HCT116 (cell line): ENCODE measurements at regions of chr10 and their contacts with region 1.

Region 1: DNA sequence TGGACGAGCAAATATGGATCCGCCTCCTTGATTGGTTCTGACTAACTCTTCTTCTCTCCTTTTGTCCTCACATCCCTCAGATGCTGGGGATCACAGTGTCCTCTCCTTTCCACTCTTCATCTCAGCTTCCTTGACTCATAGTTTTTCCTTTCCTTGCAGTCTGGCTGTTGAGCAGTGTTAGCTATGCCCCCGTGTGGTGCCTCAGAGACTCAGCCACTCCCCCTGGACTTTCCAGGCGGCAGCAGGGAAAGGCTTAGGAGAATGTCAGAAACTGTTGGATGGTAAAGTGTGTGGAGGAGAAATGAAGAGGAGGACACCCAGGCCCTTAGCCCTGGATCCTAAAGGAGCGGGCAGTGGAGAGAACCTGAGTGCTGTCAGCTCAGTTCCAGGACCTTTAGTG is 267.5 kb downstream of the CELF2 start:
- DNase-seq: no peak
- ATAC-seq: peak; percentile 67
- H3K4me3 ChIP-seq: no peak overlapping the region
- H3K27ac ChIP-seq: no peak overlapping the region
- H3K4me1 ChIP-seq: no peaks in the 10 kb centered on the region
- H3K27me3 ChIP-seq: no peaks in the 10 kb centered on the region
- CTCF ChIP-seq: peak in 1 of 3 experiments; percentile 20; a peak in 1 of 6 replicates
- POLR2A ChIP-seq: no peak
- RAD21 ChIP-seq: no peak; the same call in 1 of the 2 replicates

Region 2: DNA sequence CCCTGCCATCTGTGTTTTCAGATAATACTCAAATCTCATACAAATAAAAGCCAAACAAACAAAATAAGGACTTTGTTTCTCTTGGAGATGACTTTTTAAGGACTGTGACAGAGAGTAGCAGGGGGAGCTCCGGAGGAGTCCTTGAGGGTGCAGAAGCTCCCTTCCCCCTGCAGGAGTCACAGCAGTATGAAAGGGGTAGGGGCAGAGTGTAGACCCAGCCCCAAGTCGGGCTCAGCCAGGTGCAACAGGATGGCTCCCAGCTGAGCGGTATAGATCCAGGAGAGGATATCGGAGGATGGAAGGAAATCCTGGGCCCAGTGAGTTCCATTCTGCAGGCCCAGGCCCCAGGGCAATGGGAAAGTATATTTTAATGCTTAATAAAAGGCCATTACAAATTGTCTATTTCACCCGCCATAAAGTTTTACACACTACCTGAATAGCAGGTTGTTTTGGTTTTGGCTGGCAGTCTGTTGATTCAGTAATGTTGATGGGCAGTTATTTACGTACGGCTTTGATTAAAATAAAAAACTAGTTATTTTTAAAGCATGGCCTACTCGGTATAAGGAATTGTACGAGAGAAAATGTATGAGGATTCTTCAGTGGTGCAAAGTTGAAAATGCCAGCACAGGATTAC is 61.5 kb before region 1 on chr10:
- CTCF ChIA-PET with region 1: no interaction called
- POLR2A ChIA-PET with region 1: no interaction called
- RAD21 ChIA-PET with region 1: no interaction called
- intact Hi-C with region 1: loop called (anchors 2 kb)
- DNase-seq: no peak
- ATAC-seq: no peak
- H3K4me3 ChIP-seq: no peak overlapping the region
- H3K27ac ChIP-seq: no peak overlapping the region
- H3K4me1 ChIP-seq: no peaks in the 10 kb centered on the region
- H3K27me3 ChIP-seq: no peaks in the 10 kb centered on the region
- CTCF ChIP-seq: no peak
- POLR2A ChIP-seq: no peak
- RAD21 ChIP-seq: no peak

Region 3: DNA sequence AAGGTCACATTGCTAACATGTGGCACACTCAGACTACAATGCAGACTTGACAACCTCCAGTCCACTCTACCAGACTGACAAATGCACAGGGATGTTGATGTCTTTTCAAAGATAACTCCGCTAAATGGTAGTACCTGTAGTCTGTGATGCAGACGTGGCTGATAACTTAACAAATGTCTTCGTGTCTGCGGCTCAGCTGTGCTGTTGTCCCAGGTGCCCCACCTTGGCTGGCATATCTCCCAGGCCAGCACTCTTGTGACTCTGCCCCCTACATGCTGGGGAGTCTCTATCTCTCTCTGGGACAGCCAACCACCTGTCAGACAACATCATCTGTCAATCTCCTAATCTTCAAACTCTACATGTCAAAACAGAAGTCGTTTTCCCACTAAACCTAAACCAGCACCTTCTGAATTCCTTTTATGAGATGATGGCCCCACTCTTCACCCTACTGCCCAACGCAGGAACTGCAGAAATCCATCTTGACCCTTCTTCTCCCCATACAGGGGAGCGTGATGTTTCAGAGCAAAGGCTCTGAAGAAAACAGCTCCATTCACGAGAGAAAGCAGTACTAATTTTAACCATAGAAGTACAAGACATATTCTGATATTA is 169.9 kb after region 1 on chr10:
- CTCF ChIA-PET with region 1: no interaction called
- POLR2A ChIA-PET with region 1: no interaction called
- RAD21 ChIA-PET with region 1: no interaction called
- intact Hi-C with region 1: no loop called
- DNase-seq: no peak
- ATAC-seq: peak; percentile 64; the same call in 1 of the 2 replicates
- H3K4me3 ChIP-seq: no peak overlapping the region
- H3K27ac ChIP-seq: no peak overlapping the region
- H3K4me1 ChIP-seq: no peaks in the 10 kb centered on the region
- H3K27me3 ChIP-seq: no peaks in the 10 kb centered on the region
- CTCF ChIP-seq: peak in 2 of 3 experiments; percentile 44 to 48; a peak in 4 of 6 replicates
- POLR2A ChIP-seq: no peak
- RAD21 ChIP-seq: no peak